Caco-2 (cell line): ENCODE measurements at regions of chr1 and their contacts with region 1.

Region 1: GRCh38 chr1:241286486-241286885 is 70.5 kb downstream of the RGS7 start:
- DNase-seq: no peak
- H3K4me3 ChIP-seq: no peak overlapping the region
- H3K4me3 Mint-ChIP-seq: no peak overlapping the region
- H3K27ac Mint-ChIP-seq: no peak overlapping the region
- H3K4me1 ChIP-seq: no peaks in the 10 kb centered on the region
- H3K4me1 Mint-ChIP-seq: no peaks in the 10 kb centered on the region
- H3K27me3 ChIP-seq: no peaks in the 10 kb centered on the region; the same call in 1 of the 2 replicates
- H3K27me3 Mint-ChIP-seq: no peaks in the 10 kb centered on the region
- CTCF ChIP-seq: no peak

Region 2: GRCh38 chr1:240719953-240720700 is 566.4 kb before region 1 on chr1:
- CTCF ChIA-PET with region 1: no interaction called
- POLR2A ChIA-PET with region 1: no interaction called
- intact Hi-C with region 1: loop called (anchors 10 kb)
- DNase-seq: no peak
- H3K4me3 ChIP-seq: no peak overlapping the region
- H3K4me3 Mint-ChIP-seq: no peak overlapping the region
- H3K27ac Mint-ChIP-seq: no peak overlapping the region
- H3K4me1 ChIP-seq: no peaks in the 10 kb centered on the region
- H3K4me1 Mint-ChIP-seq: no peaks in the 10 kb centered on the region
- H3K27me3 ChIP-seq: no peaks in the 10 kb centered on the region
- H3K27me3 Mint-ChIP-seq: peaks cover 10% of the 10 kb centered on the region
- CTCF ChIP-seq: no peak